ENCODE measurements at regions of chr10 and their contacts with region 1.

Region 1: GRCh38 chr10:82737549-82737948 is 862.6 kb downstream of the NRG3 start:
- DNase-seq: no peak
- H3K4me3 ChIP-seq: no peak overlapping the region
- CTCF ChIP-seq: no peak
- POLR2A ChIP-seq: no peak

Region 2: GRCh38 chr10:82668221-82668895 is 69.2 kb before region 1 on chr10:
- intact Hi-C with region 1: loop called (anchors 2 kb)
- DNase-seq: no peak
- H3K4me3 ChIP-seq: no peak overlapping the region
- CTCF ChIP-seq: no peak
- POLR2A ChIP-seq: no peak

Measured in lower leg skin (tissue), 4 donors.